ENCODE measurements at regions of chr3 and their contacts with region 1.

Region 1: DNA sequence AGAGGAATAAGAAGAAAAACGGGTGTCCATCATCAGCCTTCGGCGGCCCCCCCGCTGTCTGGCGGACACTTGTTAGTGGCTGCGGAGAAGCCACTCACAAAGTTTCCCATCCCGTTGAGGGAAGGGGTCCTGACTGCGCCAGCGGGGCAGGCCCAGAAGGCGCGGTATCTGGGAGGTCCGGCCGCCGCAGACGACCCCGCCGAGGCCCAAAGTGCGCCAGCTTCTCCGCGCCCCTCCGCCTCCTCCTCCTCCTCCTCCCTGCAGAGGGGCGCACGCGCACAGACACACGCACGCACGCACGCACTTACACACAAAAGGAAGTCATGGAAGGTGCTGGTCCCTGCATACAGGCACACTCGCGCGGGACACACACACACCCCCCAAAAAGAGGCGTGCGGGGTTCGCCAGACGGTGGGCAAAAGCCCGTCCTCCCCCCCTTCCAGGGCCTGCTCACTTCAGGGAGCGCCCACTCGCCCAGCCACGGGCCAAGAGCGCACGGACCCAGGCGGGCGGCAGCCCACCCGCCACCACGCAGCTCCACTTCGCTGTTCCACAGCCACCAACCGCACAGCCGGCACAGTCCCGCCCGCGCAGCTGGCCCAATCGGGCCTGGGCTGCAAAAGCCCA is 18.0 kb downstream of the ZNF148 start:
- DNase-seq: peak; percentile 83

Region 2: DNA sequence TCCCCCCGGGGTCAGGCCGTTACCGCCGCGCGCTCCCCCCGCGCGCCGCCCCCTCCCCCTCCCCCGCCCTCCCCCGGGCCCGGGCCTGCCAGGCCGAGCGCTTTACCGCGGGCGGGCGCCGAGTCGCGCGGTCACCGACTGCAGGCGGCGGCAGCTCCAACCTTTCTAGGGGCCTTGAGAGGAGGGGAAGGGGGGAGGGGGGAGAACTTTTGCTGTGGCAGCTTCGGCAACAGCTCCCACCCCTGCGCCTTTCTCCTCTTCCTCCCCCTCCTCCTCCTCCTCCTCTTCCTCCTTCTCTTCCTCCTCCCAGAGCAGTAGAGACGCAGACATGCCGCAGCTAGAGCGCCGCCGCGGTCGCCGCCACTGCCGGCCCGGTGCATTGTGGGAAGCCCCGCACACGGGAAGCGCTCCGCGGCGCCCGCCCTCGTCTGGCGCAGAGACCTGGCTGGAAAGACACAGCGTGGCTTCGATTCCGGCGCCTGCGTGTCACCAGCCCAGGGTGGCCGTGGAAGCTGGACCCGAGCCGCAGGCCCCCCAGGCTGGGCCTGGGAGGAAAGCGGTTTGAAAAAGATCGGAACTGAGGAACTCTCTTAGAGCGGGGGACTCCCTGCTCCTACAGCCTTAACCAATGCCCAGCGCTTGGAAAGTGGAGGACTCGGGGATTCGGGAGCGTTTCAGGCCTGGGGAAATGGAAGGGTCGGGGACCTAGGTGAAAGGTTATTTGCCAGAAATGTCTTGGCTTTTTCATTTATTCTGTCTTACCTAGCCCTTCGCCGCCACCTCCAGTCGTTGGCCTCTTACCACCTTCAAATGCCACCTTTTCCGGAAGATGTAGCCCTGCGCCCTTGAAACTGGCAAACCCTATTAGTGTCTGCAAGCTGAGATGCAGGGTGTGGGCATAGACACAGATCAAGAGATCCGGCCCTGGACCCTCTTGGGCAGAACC is 18.1 kb after region 1 on chr3 and contains the start of gene ZNF148:
- intact Hi-C with region 1: loop called (anchors 2 kb)
- DNase-seq: peak; percentile 98
- total RNA-seq, gene ZNF148: 44.2 TPM

Measured in cardiac septum (tissue), 1 donor.